ENCODE measurements at regions of chr19 and their contacts with region 1.

Region 1: DNA sequence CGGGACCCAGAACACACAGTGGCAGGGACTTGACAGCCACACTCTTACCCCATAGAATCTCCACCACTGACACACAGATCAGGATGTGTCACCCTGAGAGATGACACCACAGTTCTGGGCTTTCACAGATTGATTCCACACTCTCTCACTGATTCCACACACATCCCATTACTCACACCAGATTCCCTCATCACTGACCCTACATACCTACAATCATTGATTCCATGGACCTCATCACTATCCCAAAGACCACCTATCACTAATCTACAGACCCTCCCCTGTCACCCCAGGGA is 57.6 kb upstream of the ZNF527 start:
- DNase-seq: no peak
- H3K4me3 ChIP-seq: peak overlapping the region in 1 of 4 experiments; percentile 56; a peak in 5 of 8 replicates
- H3K27ac ChIP-seq: no peak overlapping the region
- H3K4me1 ChIP-seq: peaks cover 0 to 2% (median 0%) of the 10 kb centered on the region in 4 experiments; a peak in 1 of 7 replicates
- H3K27me3 ChIP-seq: no peaks in the 10 kb centered on the region; a peak in 1 of 7 replicates
- CTCF ChIP-seq: no peak
- EP300 ChIP-seq: no peak
- POLR2A ChIP-seq: no peak
- RAD21 ChIP-seq: no peak

Region 2: DNA sequence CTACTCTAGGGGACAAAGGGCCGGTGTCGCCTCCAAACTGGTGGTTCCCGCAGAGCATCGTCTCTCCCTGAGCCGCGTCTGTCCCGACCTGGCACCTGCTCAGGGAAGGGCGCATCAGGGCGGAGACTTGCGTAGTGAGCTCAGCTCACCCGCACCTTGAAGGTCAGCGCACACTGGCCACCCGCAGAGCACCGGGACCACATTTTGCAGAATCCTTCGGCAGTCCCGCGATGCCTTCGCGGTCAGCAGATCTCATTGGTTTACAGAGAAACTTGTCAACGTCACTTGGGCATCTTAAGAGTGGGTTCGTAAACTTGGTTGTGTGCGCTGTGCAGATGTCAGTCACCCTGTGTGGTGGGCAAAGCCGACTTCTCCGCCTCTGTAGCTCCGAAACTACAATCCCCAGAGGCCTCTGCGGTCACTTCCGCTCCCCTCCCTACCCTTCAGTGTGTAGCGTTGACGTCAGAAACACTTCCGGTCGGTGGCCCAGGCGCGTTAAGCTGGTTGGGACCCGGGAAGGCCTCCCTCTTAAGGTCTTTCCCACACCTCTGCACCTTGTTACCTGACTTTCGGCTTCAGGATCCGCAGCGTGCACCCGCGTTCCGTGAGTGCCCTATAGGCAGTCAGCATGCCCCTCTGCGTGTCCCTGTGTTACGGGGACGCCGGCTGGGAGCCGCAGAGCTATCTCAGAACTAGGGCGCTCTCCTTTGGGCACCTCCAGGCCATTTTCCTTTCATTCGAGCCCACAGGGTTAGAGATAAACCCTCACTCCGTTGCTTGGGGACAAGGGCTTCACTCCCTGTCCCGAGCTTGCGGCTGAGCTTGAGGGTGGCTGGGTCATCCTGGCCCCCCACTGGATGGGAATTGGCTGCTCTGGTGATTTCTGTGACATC is 21.1 kb after region 1 on chr19:
- CTCF ChIA-PET with region 1: interaction called, 5 read pairs
- POLR2A ChIA-PET with region 1: interaction called, 24 read pairs
- DNase-seq: peak; percentile 88 to 90
- H3K4me3 ChIP-seq: peak overlapping the region; percentile 82 to 96 (median 94)
- H3K27ac ChIP-seq: peak overlapping the region; percentile 89
- H3K4me1 ChIP-seq: peaks cover 0 to 5% (median 4%) of the 10 kb centered on the region in 4 experiments; a peak in 5 of 7 replicates
- H3K27me3 ChIP-seq: no peaks in the 10 kb centered on the region
- CTCF ChIP-seq: no peak
- EP300 ChIP-seq: no peak
- POLR2A ChIP-seq: peak; percentile 76 to 93
- RAD21 ChIP-seq: no peak